Sciatic nerve (tissue), 2 donors: ENCODE measurements at regions of chr10 and their contacts with region 1.

Region 1: GRCh38 chr10:1011696-1012095 is 14.0 kb downstream of the IDI2 start:
- DNase-seq: no peak
- ATAC-seq: no peak

Region 2: GRCh38 chr10:230737-231136 is 781.0 kb before region 1 on chr10:
- intact Hi-C with region 1: no loop called
- DNase-seq: no peak
- ATAC-seq: no peak

Region 3: DNA sequence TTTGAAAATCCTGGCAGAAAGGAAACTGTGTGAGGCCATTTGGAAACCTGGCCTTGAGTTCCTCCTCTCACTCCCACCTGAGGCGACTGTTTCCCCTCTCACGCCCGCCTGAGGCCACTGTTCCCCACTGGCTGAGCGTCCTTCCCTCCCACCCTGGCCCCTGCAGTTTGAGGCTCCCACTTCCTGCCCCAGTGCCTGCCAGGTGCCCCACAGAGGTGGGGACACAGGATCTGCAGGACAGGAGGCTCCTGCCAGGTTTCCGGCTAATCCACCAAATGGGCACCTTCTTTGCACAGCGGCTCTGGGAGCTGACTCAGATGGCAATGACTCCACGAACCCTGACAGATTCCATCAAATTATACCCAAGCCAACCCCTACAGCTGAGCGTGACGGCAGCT is 55.9 kb before region 1 on chr10:
- intact Hi-C with region 1: loop called (anchors 2 kb)
- DNase-seq: no peak
- ATAC-seq: no peak

Region 4: DNA sequence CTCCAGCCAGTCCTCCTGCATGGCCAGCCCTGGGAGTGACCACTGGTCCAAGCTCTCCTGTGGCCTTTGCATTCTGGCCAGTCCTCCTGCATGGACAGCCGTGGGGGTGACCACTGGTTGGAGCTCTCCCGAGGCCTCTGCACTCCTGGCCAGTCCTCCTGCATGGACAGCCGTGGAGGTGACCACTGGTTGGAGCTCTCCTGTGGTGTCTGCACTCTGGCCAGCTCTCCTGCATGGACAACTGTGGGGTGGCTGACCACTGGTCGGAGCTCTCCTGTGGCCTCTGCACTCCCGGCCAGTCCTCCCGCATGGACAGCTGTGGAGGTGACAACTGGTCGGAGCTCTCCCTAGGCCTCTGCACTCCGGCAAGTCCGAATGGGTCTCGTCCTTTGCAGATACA is 754.4 kb after region 1 on chr10:
- intact Hi-C with region 1: no loop called
- DNase-seq: no peak
- ATAC-seq: no peak